ENCODE measurements at regions of chr6 and their contacts with region 1.

Region 1: GRCh38 chr6:26122793-26123674 is 35.8 kb downstream of the HFE start:
- DNase-seq: peak; percentile 76 to 97 (median 91)
- ATAC-seq: peak; percentile 64 to 70 (median 68)
- H3K4me3 ChIP-seq: peak overlapping the region; percentile 88 to 100
- H3K4me3 Mint-ChIP-seq: peak overlapping the region; percentile 99 to 100 (median 99)
- H3K27ac ChIP-seq: peak overlapping the region; percentile 87
- H3K27ac Mint-ChIP-seq: peak overlapping the region; percentile 99
- H3K4me1 ChIP-seq: peaks cover 10 to 15% of the 10 kb centered on the region in 2 experiments
- H3K4me1 Mint-ChIP-seq: peaks cover 32 to 47% (median 35%) of the 10 kb centered on the region in 3 donors
- H3K27me3 ChIP-seq: no peaks in the 10 kb centered on the region
- H3K27me3 Mint-ChIP-seq: no peaks in the 10 kb centered on the region

Region 2: DNA sequence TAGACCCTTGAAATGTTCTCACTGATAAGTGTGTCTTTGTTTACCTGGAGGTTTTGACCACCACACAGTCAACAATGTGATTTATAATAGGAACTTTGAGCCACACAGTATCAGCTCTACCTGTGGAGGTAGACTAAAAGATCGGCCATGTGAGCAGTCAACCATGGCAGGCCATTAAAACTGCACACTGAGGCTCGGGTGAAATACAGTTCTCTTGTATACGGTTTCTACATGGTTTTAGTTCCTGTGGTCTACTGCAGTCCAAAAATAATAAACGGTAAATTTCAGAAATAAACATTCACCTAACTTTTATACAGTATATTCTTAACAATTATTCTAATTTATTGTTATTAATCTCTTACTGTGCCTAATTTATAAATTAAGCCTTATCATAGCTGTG is 113.2 kb before region 1 on chr6:
- CTCF ChIA-PET with region 1: no interaction called
- POLR2A ChIA-PET with region 1: no interaction called
- DNase-seq: no peak
- ATAC-seq: no peak
- H3K4me3 ChIP-seq: no peak overlapping the region
- H3K4me3 Mint-ChIP-seq: no peak overlapping the region
- H3K27ac ChIP-seq: no peak overlapping the region
- H3K27ac Mint-ChIP-seq: no peak overlapping the region
- H3K4me1 ChIP-seq: peaks cover 0 to 6% of the 10 kb centered on the region in 2 experiments
- H3K4me1 Mint-ChIP-seq: peaks cover 4 to 7% (median 4%) of the 10 kb centered on the region in 3 donors
- H3K27me3 ChIP-seq: no peaks in the 10 kb centered on the region
- H3K27me3 Mint-ChIP-seq: no peaks in the 10 kb centered on the region

Region 3: DNA sequence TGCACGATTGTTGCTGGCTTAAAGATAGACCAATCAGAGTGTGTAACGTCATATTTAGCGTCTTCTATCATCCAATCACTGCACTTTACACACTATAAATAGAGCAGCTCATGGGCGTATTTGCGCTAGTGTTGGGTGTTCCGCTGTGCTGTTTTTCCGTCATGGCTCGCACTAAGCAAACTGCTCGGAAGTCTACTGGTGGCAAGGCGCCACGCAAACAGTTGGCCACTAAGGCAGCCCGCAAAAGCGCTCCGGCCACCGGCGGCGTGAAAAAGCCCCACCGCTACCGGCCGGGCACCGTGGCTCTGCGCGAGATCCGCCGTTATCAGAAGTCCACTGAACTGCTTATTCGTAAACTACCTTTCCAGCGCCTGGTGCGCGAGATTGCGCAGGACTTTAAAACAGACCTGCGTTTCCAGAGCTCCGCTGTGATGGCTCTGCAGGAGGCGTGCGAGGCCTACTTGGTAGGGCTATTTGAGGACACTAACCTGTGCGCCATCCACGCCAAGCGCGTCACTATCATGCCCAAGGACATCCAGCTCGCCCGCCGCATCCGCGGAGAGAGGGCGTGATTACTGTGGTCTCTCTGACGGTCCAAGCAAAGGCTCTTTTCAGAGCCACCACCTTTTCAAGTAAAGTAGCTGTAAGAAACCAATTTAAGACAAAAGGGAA is 102.6 kb before region 1 on chr6:
- CTCF ChIA-PET with region 1: interaction called in 1 of 2 experiments, 5 read pairs
- POLR2A ChIA-PET with region 1: interaction called, 12 to 52 read pairs
- DNase-seq: peak; percentile 63 to 94 (median 76)
- ATAC-seq: peak; percentile 49 to 67 (median 62)
- H3K4me3 ChIP-seq: peak overlapping the region; percentile 76 to 81
- H3K4me3 Mint-ChIP-seq: peak overlapping the region; percentile 85 to 99 (median 97)
- H3K27ac ChIP-seq: peak overlapping the region; percentile 93
- H3K27ac Mint-ChIP-seq: peak overlapping the region; percentile 99 to 100
- H3K4me1 ChIP-seq: peaks cover 13 to 37% of the 10 kb centered on the region in 2 experiments
- H3K4me1 Mint-ChIP-seq: peaks cover 30 to 38% (median 33%) of the 10 kb centered on the region in 3 donors
- H3K27me3 ChIP-seq: no peaks in the 10 kb centered on the region
- H3K27me3 Mint-ChIP-seq: no peaks in the 10 kb centered on the region

Region 4: DNA sequence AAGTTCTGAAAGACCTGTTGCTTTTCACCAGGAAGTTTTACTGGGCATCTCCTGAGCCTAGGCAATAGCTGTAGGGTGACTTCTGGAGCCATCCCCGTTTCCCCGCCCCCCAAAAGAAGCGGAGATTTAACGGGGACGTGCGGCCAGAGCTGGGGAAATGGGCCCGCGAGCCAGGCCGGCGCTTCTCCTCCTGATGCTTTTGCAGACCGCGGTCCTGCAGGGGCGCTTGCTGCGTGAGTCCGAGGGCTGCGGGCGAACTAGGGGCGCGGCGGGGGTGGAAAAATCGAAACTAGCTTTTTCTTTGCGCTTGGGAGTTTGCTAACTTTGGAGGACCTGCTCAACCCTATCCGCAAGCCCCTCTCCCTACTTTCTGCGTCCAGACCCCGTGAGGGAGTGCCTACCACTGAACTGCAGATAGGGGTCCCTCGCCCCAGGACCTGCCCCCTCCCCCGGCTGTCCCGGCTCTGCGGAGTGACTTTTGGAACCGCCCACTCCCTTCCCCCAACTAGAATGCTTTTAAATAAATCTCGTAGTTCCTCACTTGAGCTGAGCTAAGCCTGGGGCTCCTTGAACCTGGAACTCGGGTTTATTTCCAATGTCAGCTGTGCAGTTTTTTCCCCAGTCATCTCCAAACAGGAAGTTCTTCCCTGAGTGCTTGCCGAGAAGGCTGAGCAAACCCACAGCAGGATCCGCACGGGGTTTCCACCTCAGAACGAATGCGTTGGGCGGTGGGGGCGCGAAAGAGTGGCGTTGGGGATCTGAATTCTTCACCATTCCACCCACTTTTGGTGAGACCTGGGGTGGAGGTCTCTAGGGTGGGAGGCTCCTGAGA is 35.5 kb before region 1 on chr6 and contains the start of gene HFE:
- CTCF ChIA-PET with region 1: no interaction called
- POLR2A ChIA-PET with region 1: interaction called, 5 to 19 read pairs
- DNase-seq: peak in 20 of 35 experiments; percentile 3 to 48 (median 20)
- ATAC-seq: peak; percentile 13 to 33 (median 20)
- H3K4me3 ChIP-seq: peak within 1 kb of the TSS; percentile 61 to 92
- H3K4me3 Mint-ChIP-seq: peak within 1 kb of the TSS; percentile 86 to 87 (median 86)
- H3K27ac ChIP-seq: peak within 1 kb of the TSS; percentile 60
- H3K27ac Mint-ChIP-seq: peak within 1 kb of the TSS; percentile 86 to 90
- H3K4me1 ChIP-seq: peaks cover 17 to 31% of the 10 kb centered on the region in 2 experiments
- H3K4me1 Mint-ChIP-seq: peaks cover 31 to 49% (median 32%) of the 10 kb centered on the region in 3 donors
- H3K27me3 ChIP-seq: no peaks in the 10 kb centered on the region
- H3K27me3 Mint-ChIP-seq: no peaks in the 10 kb centered on the region
- total RNA-seq, gene HFE: 1.0 to 2.4 (median 1.8) TPM

Region 5: DNA sequence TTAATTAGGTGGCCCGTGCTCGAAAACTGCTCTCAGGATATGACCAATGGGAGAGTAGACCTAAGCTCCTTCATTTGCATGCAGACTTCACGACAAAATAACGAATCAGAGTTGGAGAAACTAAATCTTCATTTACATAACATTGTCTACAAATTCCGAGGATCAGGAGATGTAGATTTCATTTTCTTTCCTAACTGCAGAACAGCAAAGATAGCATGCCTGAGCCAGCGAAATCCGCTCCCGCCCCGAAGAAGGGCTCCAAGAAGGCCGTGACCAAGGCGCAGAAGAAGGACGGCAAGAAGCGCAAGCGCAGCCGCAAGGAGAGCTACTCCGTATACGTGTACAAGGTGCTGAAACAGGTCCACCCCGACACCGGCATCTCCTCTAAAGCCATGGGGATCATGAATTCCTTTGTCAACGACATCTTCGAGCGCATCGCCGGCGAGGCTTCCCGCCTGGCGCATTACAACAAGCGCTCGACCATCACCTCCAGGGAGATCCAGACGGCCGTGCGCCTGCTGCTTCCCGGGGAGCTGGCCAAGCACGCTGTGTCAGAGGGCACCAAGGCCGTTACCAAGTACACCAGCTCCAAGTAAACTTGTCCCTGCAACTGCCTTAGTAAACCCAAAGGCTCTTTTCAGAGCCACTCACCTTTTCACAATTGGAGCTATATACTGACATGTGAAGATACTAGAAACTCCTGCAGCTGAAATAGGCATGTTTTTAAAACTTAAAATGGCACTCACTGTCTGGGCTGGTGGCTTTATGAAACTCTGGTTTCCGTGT is 60.7 kb after region 1 on chr6:
- CTCF ChIA-PET with region 1: interaction called in 1 of 2 experiments, 5 read pairs
- POLR2A ChIA-PET with region 1: interaction called, 5 to 24 read pairs
- DNase-seq: peak in 25 of 35 experiments; percentile 20 to 85 (median 42)
- ATAC-seq: peak; percentile 87 to 91 (median 89)
- H3K4me3 ChIP-seq: peak overlapping the region; percentile 57 to 83
- H3K4me3 Mint-ChIP-seq: peak overlapping the region; percentile 88 to 96 (median 93)
- H3K27ac ChIP-seq: peak overlapping the region; percentile 76
- H3K27ac Mint-ChIP-seq: peak overlapping the region; percentile 94 to 98
- H3K4me1 ChIP-seq: peaks cover 12 to 30% of the 10 kb centered on the region in 2 experiments
- H3K4me1 Mint-ChIP-seq: peaks cover 42 to 48% (median 46%) of the 10 kb centered on the region in 3 donors
- H3K27me3 ChIP-seq: no peaks in the 10 kb centered on the region
- H3K27me3 Mint-ChIP-seq: no peaks in the 10 kb centered on the region

Region 6: DNA sequence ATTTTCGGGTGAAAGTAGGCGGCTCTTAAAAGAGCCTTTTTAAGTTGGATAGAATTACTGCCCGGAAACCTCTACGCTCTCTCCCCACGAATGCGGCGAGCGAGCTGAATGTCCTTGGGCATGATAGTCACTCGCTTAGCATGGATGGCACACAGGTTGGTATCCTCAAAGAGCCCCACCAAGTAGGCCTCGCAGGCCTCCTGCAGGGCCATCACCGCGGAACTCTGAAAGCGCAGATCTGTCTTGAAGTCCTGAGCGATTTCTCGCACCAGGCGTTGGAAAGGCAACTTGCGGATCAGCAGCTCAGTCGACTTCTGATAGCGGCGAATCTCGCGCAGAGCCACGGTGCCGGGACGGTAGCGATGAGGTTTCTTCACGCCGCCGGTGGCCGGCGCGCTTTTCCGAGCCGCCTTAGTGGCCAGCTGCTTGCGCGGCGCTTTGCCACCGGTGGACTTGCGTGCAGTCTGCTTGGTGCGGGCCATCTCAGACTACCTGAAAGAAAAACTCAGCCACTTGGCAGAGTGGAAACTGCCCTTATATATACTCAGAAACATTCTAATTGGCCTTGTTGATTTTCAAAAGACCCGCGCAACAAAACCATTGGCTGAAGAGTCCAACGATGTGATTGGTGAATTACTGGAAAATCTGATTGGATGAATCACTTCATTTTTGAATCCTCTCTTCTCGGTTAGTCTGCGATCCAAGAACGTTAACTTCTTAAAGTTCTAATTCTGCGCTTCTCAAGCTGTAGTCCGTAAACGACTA is 148.1 kb after region 1 on chr6:
- CTCF ChIA-PET with region 1: interaction called in 1 of 2 experiments, 10 read pairs
- POLR2A ChIA-PET with region 1: interaction called, 6 to 53 read pairs
- DNase-seq: peak; percentile 49 to 90 (median 74)
- ATAC-seq: peak; percentile 20 to 35 (median 32)
- H3K4me3 ChIP-seq: peak overlapping the region; percentile 71 to 83
- H3K4me3 Mint-ChIP-seq: no peak overlapping the region
- H3K27ac ChIP-seq: peak overlapping the region; percentile 89
- H3K27ac Mint-ChIP-seq: peak overlapping the region in 1 of 2 donors; percentile 58
- H3K4me1 ChIP-seq: peaks cover 18 to 31% of the 10 kb centered on the region in 2 experiments
- H3K4me1 Mint-ChIP-seq: peaks cover 20 to 29% (median 21%) of the 10 kb centered on the region in 3 donors
- H3K27me3 ChIP-seq: no peaks in the 10 kb centered on the region
- H3K27me3 Mint-ChIP-seq: no peaks in the 10 kb centered on the region

Region 7: DNA sequence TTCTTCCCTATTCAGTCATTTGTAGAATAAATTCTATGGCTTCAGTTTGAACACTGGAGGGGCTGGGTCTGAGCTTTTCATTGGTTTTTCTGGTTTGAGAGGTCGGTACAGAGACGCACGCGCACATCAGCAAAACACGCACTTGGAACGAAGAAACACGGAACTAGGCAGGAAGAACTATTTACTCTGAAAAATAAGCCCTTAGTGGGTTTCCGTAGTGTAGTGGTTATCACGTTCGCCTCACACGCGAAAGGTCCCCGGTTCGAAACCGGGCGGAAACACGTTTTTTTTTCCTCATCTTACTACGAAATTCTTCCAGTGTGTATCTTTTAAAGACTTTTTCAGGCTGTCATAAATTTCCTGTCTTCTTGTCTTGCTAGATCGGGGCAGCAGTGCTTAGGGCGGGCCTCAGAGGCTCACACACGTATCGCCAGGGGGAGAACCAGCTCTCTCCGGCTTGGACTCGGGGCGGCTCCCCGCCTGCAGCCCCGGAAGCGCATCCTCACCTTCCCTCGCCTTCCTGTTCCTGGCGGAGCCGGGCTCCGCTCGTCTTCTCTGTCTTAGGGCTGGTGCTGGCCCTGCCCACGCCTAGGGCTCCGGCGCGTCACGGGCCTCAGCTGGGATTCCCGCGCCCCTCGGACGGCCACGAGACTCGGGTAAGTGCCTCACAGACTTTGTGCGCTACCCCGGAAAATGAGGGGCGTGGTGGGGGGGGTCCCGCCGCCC is 415.0 kb after region 1 on chr6 and contains the start of gene HMGN4:
- CTCF ChIA-PET with region 1: no interaction called
- POLR2A ChIA-PET with region 1: no interaction called
- DNase-seq: peak; percentile 66 to 96 (median 81)
- ATAC-seq: peak; percentile 71 to 78 (median 74)
- H3K4me3 ChIP-seq: peak within 1 kb of the TSS; percentile 95 to 96
- H3K4me3 Mint-ChIP-seq: peak within 1 kb of the TSS; percentile 94 to 96 (median 95)
- H3K27ac ChIP-seq: peak within 1 kb of the TSS; percentile 91
- H3K27ac Mint-ChIP-seq: peak within 1 kb of the TSS; percentile 91 to 95
- H3K4me1 ChIP-seq: peaks cover 37 to 50% of the 10 kb centered on the region in 2 experiments
- H3K4me1 Mint-ChIP-seq: peaks cover 64 to 71% (median 68%) of the 10 kb centered on the region in 3 donors
- H3K27me3 ChIP-seq: no peaks in the 10 kb centered on the region
- H3K27me3 Mint-ChIP-seq: peaks cover 0 to 4% of the 10 kb centered on the region in 2 donors
- total RNA-seq, gene HMGN4: 49.2 to 92.5 (median 62.7) TPM

Region 8: GRCh38 chr6:27146706-27147505 is 1023.9 kb after region 1 on chr6:
- CTCF ChIA-PET with region 1: interaction called in 1 of 2 experiments, 3 read pairs
- POLR2A ChIA-PET with region 1: interaction called, 12 to 42 read pairs
- DNase-seq: peak; percentile 43 to 96 (median 69)
- ATAC-seq: peak; percentile 85 to 88 (median 86)
- H3K4me3 ChIP-seq: peak overlapping the region; percentile 77 to 93
- H3K4me3 Mint-ChIP-seq: no peak overlapping the region
- H3K27ac ChIP-seq: peak overlapping the region; percentile 91
- H3K27ac Mint-ChIP-seq: no peak overlapping the region
- H3K4me1 ChIP-seq: peaks cover 11 to 29% of the 10 kb centered on the region in 2 experiments
- H3K4me1 Mint-ChIP-seq: peaks cover 13 to 20% (median 18%) of the 10 kb centered on the region in 3 donors
- H3K27me3 ChIP-seq: no peaks in the 10 kb centered on the region
- H3K27me3 Mint-ChIP-seq: no peaks in the 10 kb centered on the region

Measured in T-cell (primary cell).